ENCODE measurements at regions of chr17 and their contacts with region 1.

Region 1: DNA sequence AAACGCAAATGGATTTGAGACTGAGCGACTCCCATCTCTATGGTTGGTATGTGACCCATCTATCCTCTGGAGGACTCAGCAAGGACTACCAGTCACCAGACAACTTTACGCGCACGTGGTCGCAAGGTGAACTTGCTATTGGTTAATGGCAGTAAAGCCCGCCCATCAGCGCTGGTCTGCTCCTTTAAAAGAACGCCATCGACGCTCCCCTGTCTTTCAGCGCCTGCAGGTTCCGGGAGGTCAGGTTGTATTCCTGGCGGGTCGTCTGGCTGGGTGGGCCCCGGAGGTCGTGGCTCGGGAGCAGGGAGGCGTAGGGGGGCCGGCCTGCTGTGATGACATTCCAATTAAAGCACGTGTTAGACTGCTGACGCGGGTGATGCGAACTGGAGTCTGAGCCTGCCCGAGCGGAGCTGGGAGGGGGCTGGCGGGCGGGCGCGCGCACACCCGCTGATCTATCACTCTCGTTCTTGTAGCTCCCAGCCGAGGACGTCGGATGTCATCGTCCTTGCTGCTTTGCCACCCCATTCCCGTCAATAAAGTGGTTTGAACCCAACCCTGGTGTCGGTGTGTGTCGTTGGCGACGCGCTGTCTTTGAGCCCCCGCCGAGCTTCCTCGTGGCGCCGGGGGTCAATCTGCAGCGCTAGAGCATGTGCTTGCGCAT is 15.9 kb upstream of the ERN1 start:
- DNase-seq: peak; percentile 97
- ATAC-seq: peak; percentile 96

Region 2: GRCh38 chr17:64262417-64263260 is 116.8 kb after region 1 on chr17 and contains the start of gene TEX2:
- intact Hi-C with region 1: loop called (anchors 5 kb)
- DNase-seq: peak; percentile 82
- ATAC-seq: peak; percentile 72
- total RNA-seq, gene TEX2: 55.4 TPM

Region 3: DNA sequence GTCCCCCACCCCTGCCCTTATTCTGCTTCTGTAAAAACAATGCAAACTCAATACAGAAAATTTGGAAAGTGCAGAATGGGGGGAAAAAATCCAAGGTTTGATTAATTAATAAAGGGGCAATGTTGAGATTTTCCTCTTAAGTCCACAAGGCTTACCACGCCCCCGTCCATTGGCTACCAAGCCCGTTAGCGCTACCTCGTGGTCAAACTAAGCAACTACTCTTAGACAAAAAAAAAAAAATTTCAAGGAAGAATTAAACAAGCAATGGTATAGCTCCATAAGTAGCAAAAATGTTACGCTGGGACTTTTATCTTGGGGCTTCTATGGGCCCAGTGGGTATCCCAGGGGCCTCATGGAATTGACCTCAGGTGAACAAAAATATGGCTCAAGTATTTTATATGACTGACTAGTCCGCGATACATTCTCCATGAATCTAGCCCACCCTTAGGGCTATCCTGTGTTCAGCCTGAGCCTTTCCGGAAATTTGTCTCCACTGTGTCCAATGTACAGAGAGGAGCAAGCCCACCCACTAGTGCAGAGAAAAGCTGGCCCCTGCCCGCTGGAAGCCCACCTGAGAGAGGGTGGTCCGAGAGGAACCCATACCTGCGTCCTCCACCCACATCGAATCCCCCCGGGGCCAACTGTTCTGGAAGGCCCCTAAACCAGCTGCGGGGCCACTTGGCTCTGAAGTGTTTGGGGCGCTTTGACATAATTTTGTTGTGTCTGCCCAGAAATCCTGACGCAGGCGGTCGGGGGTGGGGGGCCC is 136.3 kb after region 1 on chr17:
- intact Hi-C with region 1: loop called (anchors 5 kb)
- DNase-seq: peak; percentile 48
- ATAC-seq: peak; percentile 39

Region 4: GRCh38 chr17:64357191-64357981 is 211.5 kb after region 1 on chr17:
- intact Hi-C with region 1: no loop called
- DNase-seq: peak; percentile 74
- ATAC-seq: peak; percentile 91

Measured in left ventricle myocardium superior (tissue), 1 donor.